ENCODE measurements at regions of chr11 and their contacts with region 1.

Region 1: DNA sequence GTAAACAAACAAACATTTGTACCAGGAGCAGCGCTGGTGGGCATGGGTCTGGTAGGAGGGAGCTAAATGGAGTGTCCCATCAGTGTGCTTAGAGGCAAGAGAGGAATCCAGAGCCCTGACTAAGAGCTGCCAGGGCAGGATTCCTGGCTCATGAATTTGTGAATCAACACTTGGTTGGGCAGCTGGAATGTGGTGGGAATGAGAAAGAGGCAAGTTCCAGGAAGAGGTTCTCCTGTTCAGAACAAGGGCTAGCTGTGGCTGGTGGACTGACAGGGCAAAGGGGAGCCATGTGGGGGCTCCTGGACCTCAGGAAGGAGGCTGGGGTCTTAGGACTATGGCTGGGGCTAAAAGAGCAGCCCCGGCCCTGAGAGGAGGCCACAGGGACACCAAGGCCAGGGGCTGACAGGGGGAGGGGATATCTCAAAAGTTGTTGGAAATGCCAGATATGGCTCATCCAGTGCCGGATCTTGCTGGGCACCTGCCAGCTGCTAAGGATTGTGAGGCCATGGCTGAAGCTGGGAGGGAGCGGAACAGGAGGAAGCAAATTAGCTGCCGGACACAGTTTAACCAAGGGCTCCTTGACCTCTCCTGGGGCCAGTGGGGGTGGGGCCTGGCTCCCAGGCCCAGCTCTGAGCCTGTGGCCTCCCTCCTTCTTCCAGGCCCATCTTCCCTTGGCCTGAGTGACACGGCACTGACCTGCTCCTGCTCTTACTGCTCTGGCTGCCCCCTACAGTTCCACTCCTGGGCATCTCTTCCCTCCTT is 14.6 kb upstream of the P2RY6 start:
- DNase-seq: peak in 1 of 2 donors; percentile 92
- H3K4me3 ChIP-seq: no peak overlapping the region
- H3K27ac ChIP-seq: peak overlapping the region; percentile 94
- H3K4me1 ChIP-seq: peaks cover 12 to 15% of the 10 kb centered on the region in 2 donors
- H3K27me3 ChIP-seq: no peaks in the 10 kb centered on the region
- CTCF ChIP-seq: no peak

Region 2: GRCh38 chr11:73325036-73325981 is 67.8 kb after region 1 on chr11:
- intact Hi-C with region 1: loop called (anchors 5 kb)
- DNase-seq: peak; percentile 58 to 90
- H3K4me3 ChIP-seq: peak overlapping the region in 1 of 2 donors; percentile 37
- H3K27ac ChIP-seq: peak overlapping the region; percentile 94 to 96
- H3K4me1 ChIP-seq: peaks cover 59 to 93% of the 10 kb centered on the region in 2 donors
- H3K27me3 ChIP-seq: no peaks in the 10 kb centered on the region
- CTCF ChIP-seq: no peak